Calu3 (cell line): ENCODE measurements at regions of chr16 and their contacts with region 1.

Region 1: GRCh38 chr16:58589326-58589905 is 40.2 kb downstream of the CNOT1 start:
- DNase-seq: no peak
- H3K4me3 Mint-ChIP-seq: no peak overlapping the region
- H3K27ac Mint-ChIP-seq: no peak overlapping the region
- H3K4me1 Mint-ChIP-seq: no peaks in the 10 kb centered on the region
- H3K27me3 Mint-ChIP-seq: no peaks in the 10 kb centered on the region
- CTCF ChIP-seq: no peak

Region 2: DNA sequence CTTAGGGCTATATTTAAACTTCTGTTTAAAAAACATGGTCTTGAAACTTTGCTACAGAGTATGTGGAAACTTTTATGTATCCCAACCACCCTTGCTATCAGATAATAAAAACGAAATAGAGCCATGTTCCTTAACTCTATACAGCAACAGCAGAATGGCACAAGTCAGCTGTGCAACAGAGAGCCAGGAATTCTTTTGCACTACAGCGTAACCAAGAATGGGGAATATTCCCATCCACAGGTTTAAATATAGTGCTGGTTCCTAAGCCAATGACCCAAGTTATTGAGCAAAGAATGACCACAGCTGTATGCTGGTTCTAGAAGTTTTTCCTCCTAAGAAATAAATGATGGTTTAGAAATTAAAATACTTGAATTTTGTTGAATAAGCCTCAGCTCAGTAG is 41.0 kb before region 1 on chr16:
- CTCF ChIA-PET with region 1: interaction called, 3 read pairs
- intact Hi-C with region 1: loop called (anchors 5 kb)
- DNase-seq: no peak
- H3K4me3 Mint-ChIP-seq: no peak overlapping the region
- H3K27ac Mint-ChIP-seq: no peak overlapping the region
- H3K4me1 Mint-ChIP-seq: no peaks in the 10 kb centered on the region
- H3K27me3 Mint-ChIP-seq: no peaks in the 10 kb centered on the region
- CTCF ChIP-seq: no peak